Natural killer cell (primary cell): ENCODE measurements at regions of chr12 and their contacts with region 1.

Region 1: DNA sequence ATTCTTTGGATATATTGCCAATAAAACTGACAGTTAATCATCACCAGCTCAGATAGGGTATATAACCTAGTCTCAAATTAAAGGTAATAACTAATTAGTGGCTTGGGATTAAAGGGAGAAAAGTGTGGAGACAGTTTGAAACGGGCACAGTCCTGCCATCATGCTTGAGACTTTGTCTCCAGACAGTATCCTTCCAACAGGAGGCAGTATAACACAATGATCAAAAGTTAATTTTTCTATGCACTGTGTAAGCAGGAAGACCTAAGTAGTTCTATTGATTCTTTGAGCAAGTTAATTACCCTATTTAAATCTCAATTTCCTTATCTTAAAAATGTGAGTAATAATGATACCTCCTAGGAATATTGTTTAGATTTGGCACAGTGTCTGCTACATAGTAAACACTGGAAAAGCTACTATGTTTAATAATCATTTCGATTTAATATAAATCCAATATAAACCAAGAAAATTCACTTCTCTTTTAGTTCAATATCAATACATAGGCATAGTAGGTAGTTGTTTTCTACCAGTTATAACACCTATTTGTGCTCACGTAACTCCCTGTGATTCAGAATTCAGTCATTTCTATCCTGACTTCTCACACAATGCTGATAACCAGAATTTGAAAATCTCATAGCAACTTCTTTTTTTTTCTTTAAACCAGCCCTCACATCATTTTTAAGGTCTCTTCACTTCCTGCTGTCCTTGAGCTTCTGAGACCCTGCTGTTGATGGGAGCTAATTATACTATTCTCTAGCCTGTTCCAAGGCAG is 53.7 kb downstream of the GALNT4 start:
- DNase-seq: peak in 1 of 2 donors; percentile 74
- ATAC-seq: peak; percentile 37 to 69 (median 62)
- H3K4me3 ChIP-seq: no peak overlapping the region
- H3K4me3 Mint-ChIP-seq: peak overlapping the region; percentile 53
- H3K27ac ChIP-seq: peak overlapping the region; percentile 88
- H3K27ac Mint-ChIP-seq: peak overlapping the region; percentile 87 to 92
- H3K4me1 ChIP-seq: peaks cover 18% of the 10 kb centered on the region
- H3K4me1 Mint-ChIP-seq: peaks cover 61% of the 10 kb centered on the region in 2 donors
- H3K27me3 ChIP-seq: no peaks in the 10 kb centered on the region
- H3K27me3 Mint-ChIP-seq: no peaks in the 10 kb centered on the region
- CTCF ChIP-seq: peak; percentile 64

Region 2: DNA sequence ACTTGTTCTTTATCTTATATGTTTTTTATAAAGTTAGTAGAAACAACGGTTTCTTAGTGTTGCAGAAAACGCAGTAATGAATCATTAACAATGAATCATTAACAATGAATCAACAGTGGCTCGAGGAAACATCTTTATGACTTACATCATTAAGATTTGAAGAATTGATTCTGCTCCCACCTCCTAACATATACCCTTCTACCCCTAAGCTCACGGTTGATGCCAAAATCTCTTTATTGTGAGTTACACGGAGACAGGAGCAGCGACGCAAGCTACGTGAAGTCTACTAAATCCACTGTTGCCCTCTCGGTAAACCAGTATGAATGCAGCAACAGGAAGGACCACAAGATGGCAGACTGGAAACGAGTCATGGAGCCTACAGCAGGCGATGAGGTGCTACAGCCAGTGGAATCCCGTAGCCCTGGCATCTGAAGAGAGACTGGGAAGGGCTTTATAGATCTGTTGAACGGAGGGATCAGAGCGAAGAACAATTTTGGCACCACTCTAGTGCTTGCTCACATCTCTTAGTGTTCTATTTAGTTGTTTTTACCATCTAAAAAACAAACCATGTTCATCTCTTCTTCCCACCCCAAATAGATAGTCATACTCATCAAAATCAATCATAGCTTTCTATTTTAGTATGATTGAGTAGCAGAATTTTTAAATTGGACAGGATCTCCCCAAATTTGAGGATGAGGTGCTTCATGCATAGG is 451.4 kb before region 1 on chr12:
- intact Hi-C with region 1: loop called (anchors 2 kb)
- DNase-seq: peak; percentile 55 to 86
- ATAC-seq: peak; percentile 91 to 99 (median 97)
- H3K4me3 ChIP-seq: no peak overlapping the region
- H3K4me3 Mint-ChIP-seq: no peak overlapping the region
- H3K27ac ChIP-seq: no peak overlapping the region
- H3K27ac Mint-ChIP-seq: no peak overlapping the region
- H3K4me1 ChIP-seq: peaks cover 4% of the 10 kb centered on the region
- H3K4me1 Mint-ChIP-seq: peaks cover 5 to 7% of the 10 kb centered on the region in 2 donors
- H3K27me3 ChIP-seq: no peaks in the 10 kb centered on the region
- H3K27me3 Mint-ChIP-seq: peaks cover 0 to 6% of the 10 kb centered on the region in 2 donors
- CTCF ChIP-seq: peak; percentile 72

Region 3: DNA sequence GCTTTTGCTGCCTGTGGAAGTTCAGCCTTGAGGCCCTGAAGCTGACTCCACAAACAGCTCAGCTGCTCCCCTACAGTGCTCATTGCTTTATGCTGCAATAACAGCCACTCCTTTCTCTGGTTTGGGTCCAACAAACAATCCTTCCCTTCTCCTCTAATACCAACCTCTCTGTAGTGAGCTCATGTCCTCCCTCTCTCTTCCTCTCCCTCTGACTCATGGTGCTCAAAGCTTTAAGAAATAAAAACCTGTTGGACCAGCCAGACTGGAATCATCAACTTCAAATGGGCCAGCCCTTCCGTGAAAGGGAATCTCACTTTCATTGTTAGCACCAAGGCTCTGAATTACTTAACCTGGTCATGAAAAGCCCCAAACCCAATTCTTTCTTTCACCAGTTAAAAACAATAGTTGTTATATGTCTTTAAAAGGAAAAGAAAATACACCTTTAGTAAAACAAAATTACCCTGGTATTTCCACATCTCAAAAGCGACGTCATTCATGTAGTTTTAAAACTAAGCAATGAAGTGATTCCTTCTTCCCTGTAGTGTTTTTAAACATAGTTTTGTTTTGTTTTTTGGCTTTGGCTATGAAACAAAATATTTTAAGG is 245.0 kb before region 1 on chr12:
- intact Hi-C with region 1: loop called (anchors 2 kb)
- DNase-seq: no peak
- ATAC-seq: peak; percentile 13 to 30 (median 28)
- H3K4me3 ChIP-seq: no peak overlapping the region
- H3K4me3 Mint-ChIP-seq: peak overlapping the region; percentile 33
- H3K27ac ChIP-seq: peak overlapping the region; percentile 50
- H3K27ac Mint-ChIP-seq: peak overlapping the region; percentile 85 to 89
- H3K4me1 ChIP-seq: peaks cover 30% of the 10 kb centered on the region
- H3K4me1 Mint-ChIP-seq: peaks cover 56 to 70% of the 10 kb centered on the region in 2 donors
- H3K27me3 ChIP-seq: no peaks in the 10 kb centered on the region
- H3K27me3 Mint-ChIP-seq: no peaks in the 10 kb centered on the region
- CTCF ChIP-seq: no peak

Region 4: DNA sequence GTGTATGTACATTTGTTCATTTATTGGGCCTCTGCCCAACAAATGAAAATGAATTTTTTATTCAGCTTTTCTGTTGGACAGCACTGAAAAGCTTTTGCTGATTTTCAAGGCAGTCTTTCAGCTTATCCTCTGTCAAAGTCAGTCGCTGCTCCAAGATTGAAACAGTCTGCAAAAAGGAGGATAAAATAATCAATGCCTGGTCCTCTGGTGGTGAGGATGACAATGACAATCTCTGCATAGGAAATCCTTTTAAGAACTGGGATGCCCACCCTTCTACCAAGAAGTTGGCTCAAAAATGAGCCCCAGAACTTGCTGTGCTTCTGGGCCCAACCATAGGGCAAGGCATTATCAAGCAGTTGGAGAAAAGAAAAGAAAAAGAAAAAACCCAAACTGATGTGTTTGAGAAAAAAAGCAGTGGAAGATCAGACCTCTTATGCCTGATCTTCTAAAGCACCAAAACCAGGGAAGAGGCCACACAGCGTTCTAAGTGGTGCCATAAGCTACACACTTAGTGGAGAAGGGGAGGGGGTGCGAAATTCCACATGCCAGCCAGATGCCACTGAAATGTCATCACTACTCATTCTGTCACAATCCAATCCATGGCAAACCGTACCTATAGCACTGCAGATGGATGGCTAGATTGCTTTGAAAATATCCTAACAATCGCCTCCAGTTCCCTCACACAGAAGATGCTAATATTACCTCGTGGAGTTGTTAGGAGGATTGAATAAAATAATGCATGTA is 49.7 kb before region 1 on chr12:
- intact Hi-C with region 1: no loop called
- DNase-seq: no peak
- ATAC-seq: no peak
- H3K4me3 ChIP-seq: no peak overlapping the region
- H3K4me3 Mint-ChIP-seq: no peak overlapping the region
- H3K27ac ChIP-seq: no peak overlapping the region
- H3K27ac Mint-ChIP-seq: no peak overlapping the region
- H3K4me1 ChIP-seq: no peaks in the 10 kb centered on the region
- H3K4me1 Mint-ChIP-seq: peaks cover 17% of the 10 kb centered on the region in 2 donors
- H3K27me3 ChIP-seq: no peaks in the 10 kb centered on the region
- H3K27me3 Mint-ChIP-seq: no peaks in the 10 kb centered on the region
- CTCF ChIP-seq: no peak

Region 5: GRCh38 chr12:89524541-89525285 is 53.8 kb after region 1 on chr12 and contains the start of gene GALNT4:
- intact Hi-C with region 1: loop called (anchors 1 kb)
- DNase-seq: peak; percentile 65 to 87
- ATAC-seq: peak; percentile 64 to 81 (median 75)
- H3K4me3 ChIP-seq: peak within 1 kb of the TSS; percentile 100
- H3K4me3 Mint-ChIP-seq: peak within 1 kb of the TSS; percentile 96
- H3K27ac ChIP-seq: peak within 1 kb of the TSS; percentile 96
- H3K27ac Mint-ChIP-seq: peak within 1 kb of the TSS; percentile 86 to 93
- H3K4me1 ChIP-seq: peaks cover 25% of the 10 kb centered on the region
- H3K4me1 Mint-ChIP-seq: peaks cover 45 to 46% of the 10 kb centered on the region in 2 donors
- H3K27me3 ChIP-seq: no peaks in the 10 kb centered on the region
- H3K27me3 Mint-ChIP-seq: no peaks in the 10 kb centered on the region
- CTCF ChIP-seq: peak; percentile 57
- total RNA-seq, gene GALNT4: 14.3 to 19.9 (median 18.7) TPM

Region 6: DNA sequence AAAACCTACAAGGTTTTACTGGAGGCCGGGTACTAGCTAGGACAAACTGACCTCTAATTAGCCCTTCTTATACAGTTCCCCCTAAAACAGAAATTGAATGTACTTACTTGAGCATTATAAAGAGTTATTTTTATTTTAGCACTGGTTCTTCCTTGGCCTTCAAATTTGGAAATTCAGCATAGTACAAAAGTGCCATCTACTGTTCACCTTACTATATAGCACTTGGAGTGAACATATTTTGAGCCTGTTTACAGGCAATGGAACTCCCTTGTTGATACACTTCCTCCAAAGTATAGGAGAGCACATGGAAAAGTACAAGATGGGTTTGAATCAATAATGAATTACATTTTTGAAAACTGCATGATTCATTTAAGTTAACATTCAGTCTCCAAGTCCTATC is 58.8 kb after region 1 on chr12:
- intact Hi-C with region 1: loop called (anchors 1 kb)
- DNase-seq: peak in 1 of 2 donors; percentile 73
- ATAC-seq: peak; percentile 39 to 53 (median 45)
- H3K4me3 ChIP-seq: no peak overlapping the region
- H3K4me3 Mint-ChIP-seq: peak overlapping the region; percentile 35
- H3K27ac ChIP-seq: no peak overlapping the region
- H3K27ac Mint-ChIP-seq: peak overlapping the region in 1 of 2 donors; percentile 79
- H3K4me1 ChIP-seq: no peaks in the 10 kb centered on the region
- H3K4me1 Mint-ChIP-seq: peaks cover 12 to 14% of the 10 kb centered on the region in 2 donors
- H3K27me3 ChIP-seq: no peaks in the 10 kb centered on the region
- H3K27me3 Mint-ChIP-seq: no peaks in the 10 kb centered on the region
- CTCF ChIP-seq: peak; percentile 84

Region 7: DNA sequence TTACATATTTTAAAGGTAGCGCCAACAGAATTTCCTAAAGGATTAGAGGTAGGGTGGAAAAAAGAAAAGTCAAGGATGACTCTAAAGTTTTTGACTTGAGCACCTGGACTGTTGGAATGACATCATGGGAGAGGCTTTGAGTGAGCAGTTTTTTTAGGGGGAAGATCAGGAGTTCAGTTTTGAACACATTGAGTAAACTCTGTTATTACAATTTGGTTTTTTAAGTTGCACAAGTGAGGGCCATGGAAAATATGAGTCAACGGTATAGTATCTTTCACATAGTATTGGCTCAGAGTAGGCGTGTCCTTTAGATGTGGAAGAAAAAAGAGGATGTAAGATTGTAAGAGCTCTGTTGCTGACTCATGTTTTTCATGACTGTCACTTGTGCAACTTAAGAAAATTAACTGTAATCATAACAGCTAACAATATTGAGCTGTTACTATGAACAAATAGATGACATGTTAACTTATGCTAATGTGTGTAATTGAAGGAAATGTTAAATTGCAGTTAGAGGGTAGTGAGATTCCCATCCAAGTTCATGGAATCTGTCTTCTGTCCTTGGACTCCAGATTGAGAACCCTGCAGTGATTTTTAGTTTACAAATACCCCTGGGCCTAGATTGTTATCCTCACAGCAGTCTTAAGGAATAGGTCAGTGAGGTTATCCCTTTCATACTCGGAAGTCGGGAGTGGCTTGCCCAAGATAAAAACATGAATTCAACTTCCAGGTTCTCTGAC is 285.8 kb after region 1 on chr12:
- intact Hi-C with region 1: loop called (anchors 2 kb)
- DNase-seq: peak in 1 of 2 donors; percentile 67
- ATAC-seq: peak; percentile 77 to 88 (median 79)
- H3K4me3 ChIP-seq: no peak overlapping the region
- H3K4me3 Mint-ChIP-seq: peak overlapping the region; percentile 18
- H3K27ac ChIP-seq: peak overlapping the region; percentile 72
- H3K27ac Mint-ChIP-seq: peak overlapping the region; percentile 80 to 88
- H3K4me1 ChIP-seq: peaks cover 10% of the 10 kb centered on the region
- H3K4me1 Mint-ChIP-seq: peaks cover 54 to 55% of the 10 kb centered on the region in 2 donors
- H3K27me3 ChIP-seq: no peaks in the 10 kb centered on the region
- H3K27me3 Mint-ChIP-seq: no peaks in the 10 kb centered on the region
- CTCF ChIP-seq: no peak